Prostate gland (tissue), 2 donors: ENCODE measurements at regions of chr13 and their contacts with region 1.

Region 1: DNA sequence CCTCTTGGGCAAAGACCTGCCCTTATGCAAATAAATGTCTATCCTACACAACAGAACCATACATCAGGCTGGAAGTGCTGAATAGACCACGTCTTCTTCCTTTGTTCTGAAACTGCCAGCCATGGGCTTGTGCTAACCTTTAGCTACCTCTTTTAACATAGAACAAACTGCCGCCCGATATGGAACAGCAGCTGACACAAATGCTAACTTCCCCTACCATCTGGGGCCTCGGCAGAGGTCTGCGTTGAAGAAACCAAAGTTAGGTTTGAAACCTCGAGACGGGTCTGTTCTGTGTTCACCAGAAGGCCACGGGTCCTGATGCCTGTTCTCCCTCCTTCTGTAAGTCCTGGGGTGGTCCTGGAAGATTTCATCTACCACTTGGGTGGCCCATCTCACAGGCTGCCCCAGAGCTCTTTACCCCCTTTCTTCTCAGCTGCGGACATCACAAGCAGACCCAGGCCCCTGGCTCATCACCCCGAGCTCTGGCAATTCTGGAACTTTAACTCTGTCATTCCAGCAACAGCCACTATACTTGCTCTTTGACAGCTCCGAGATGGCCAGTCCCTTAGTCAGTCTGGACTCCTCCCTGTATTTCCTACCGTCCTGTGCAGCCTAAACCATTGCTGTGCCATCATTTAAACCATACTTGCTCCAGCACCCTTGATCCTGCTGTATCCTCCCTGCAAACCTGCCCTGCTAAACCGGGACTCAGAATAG is 146.7 kb downstream of the USP12 start:
- DNase-seq: no peak
- H3K4me3 ChIP-seq: no peak overlapping the region
- H3K27ac ChIP-seq: no peak overlapping the region
- H3K4me1 ChIP-seq: peaks cover 3% of the 10 kb centered on the region
- H3K27me3 ChIP-seq: no peaks in the 10 kb centered on the region
- CTCF ChIP-seq: no peak
- POLR2A ChIP-seq: no peak

Region 2: DNA sequence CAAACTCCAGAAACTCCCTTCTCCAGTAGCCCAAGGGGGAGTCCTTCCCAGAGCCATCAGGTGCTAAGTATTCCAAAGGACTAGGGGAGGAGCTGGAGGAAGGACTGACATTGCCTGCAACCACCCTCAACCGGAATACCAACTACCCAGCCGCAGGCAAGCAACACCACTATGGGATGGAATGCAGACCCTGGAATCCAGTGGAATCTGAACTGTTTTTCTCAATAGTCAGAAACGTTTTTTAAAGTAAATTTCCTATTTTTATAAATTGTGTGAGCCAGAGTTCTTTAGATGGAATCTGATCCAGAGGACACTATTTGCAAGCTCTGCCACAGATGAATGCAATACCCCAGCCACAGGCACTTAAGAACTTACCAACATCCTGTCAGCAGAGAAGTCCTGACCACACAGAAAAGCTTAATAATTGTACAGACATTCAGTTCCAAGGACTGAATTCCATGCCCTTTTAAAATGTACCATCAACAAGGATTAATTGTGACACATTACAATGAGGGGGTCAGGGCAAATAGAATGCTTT is 54.6 kb after region 1 on chr13:
- intact Hi-C with region 1: loop called (anchors 2 kb)
- DNase-seq: no peak
- H3K4me3 ChIP-seq: no peak overlapping the region
- H3K27ac ChIP-seq: no peak overlapping the region
- H3K4me1 ChIP-seq: no peaks in the 10 kb centered on the region
- H3K27me3 ChIP-seq: no peaks in the 10 kb centered on the region
- CTCF ChIP-seq: no peak
- POLR2A ChIP-seq: no peak